ENCODE measurements at regions of chr12 and their contacts with region 1.

Region 1: GRCh38 chr12:33587870-33588712 is 148.5 kb upstream of the SYT10 start:
- DNase-seq: peak; percentile 93
- ATAC-seq: peak; percentile 72
- H3K4me3 ChIP-seq: peak overlapping the region; percentile 63
- H3K27ac ChIP-seq: peak overlapping the region; percentile 100
- H3K4me1 ChIP-seq: peaks cover 39% of the 10 kb centered on the region
- H3K27me3 ChIP-seq: no peaks in the 10 kb centered on the region
- CTCF ChIP-seq: no peak

Region 2: GRCh38 chr12:33205981-33206380 is 382.1 kb before region 1 on chr12:
- CTCF ChIA-PET with region 1: no interaction called
- POLR2A ChIA-PET with region 1: no interaction called
- intact Hi-C with region 1: loop called (anchors 10 kb)
- DNase-seq: peak; percentile 56
- ATAC-seq: peak; percentile 87
- H3K4me3 ChIP-seq: peak overlapping the region; percentile 43; the same call in 1 of the 2 replicates
- H3K27ac ChIP-seq: peak overlapping the region; percentile 51
- H3K4me1 ChIP-seq: peaks cover 15% of the 10 kb centered on the region
- H3K27me3 ChIP-seq: no peaks in the 10 kb centered on the region
- CTCF ChIP-seq: no peak

Region 3: DNA sequence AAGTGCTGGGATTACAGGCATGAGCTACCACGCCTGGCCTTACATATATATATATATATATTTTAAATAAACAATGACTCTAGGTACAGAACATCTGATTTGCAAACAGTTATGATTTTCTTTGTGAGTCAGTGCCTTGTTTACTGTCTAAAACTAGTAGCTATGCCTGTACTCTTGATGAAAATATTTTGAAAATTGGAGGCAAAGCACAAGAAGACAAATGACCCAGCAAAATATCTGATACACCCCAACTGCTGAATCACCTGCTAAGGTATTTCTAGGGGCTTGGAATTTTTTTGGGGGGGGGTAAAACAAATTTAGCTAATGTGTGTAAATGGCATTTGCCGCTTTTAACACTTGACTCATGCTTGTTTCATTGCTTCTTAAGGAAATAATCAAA is 217.8 kb before region 1 on chr12:
- CTCF ChIA-PET with region 1: no interaction called
- POLR2A ChIA-PET with region 1: no interaction called
- intact Hi-C with region 1: loop called (anchors 10 kb)
- DNase-seq: peak; percentile 85
- ATAC-seq: peak; percentile 93
- H3K4me3 ChIP-seq: no peak overlapping the region
- H3K27ac ChIP-seq: peak overlapping the region; percentile 26; the same call in 1 of the 2 replicates
- H3K4me1 ChIP-seq: peaks cover 31% of the 10 kb centered on the region
- H3K27me3 ChIP-seq: no peaks in the 10 kb centered on the region
- CTCF ChIP-seq: no peak

Region 4: GRCh38 chr12:33488036-33488435 is 100.1 kb before region 1 on chr12:
- CTCF ChIA-PET with region 1: no interaction called
- POLR2A ChIA-PET with region 1: no interaction called
- intact Hi-C with region 1: loop called (anchors 10 kb)
- DNase-seq: peak; percentile 57
- ATAC-seq: peak; percentile 38
- H3K4me3 ChIP-seq: no peak overlapping the region
- H3K27ac ChIP-seq: no peak overlapping the region
- H3K4me1 ChIP-seq: peaks cover 18% of the 10 kb centered on the region
- H3K27me3 ChIP-seq: no peaks in the 10 kb centered on the region
- CTCF ChIP-seq: no peak

Region 5: DNA sequence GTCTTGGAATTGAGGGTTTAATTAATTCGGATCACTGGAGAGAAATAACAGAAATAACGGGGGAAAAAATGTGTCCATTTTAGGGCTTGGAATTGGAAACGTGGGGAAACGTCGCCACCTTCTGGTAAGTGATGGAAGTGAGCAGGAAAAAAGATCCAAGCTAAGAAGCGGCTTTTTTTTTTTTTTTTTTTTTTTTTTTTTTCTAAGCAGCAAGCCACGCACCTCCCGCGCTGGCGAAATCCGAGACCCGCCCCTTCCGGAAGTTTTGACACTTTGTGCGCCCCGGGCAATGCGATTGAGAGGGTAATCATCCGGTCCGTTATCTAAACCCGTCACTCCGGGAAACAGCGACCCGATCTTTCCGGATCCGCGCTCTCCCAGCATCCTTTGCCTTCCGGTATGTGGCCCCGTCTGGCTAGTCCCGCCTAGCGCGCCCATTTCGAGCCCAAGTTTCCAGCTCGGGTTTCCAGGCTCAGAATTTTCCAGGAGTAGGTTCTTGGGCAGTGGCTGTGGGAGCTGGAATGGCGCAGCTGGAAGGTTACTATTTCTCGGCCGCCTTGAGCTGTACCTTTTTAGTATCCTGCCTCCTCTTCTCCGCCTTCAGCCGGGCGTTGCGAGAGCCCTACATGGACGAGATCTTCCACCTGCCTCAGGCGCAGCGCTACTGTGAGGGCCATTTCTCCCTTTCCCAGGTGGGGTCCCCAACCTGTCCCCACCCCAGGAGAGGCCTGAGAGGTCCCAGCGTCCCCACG is 434.2 kb after region 1 on chr12 and contains the start of gene ALG10:
- CTCF ChIA-PET with region 1: no interaction called
- POLR2A ChIA-PET with region 1: no interaction called
- intact Hi-C with region 1: loop called (anchors 5 kb)
- DNase-seq: peak; percentile 98
- ATAC-seq: peak; percentile 99
- H3K4me3 ChIP-seq: peak within 1 kb of the TSS; percentile 98
- H3K27ac ChIP-seq: peak within 1 kb of the TSS; percentile 57
- H3K4me1 ChIP-seq: peaks cover 12% of the 10 kb centered on the region; the same call in 1 of the 2 replicates
- H3K27me3 ChIP-seq: no peaks in the 10 kb centered on the region
- CTCF ChIP-seq: peak; percentile 69
- total RNA-seq, gene ALG10: 15.7 TPM in 2 replicates